ENCODE measurements at regions of chr4 and their contacts with region 1.

Region 1: DNA sequence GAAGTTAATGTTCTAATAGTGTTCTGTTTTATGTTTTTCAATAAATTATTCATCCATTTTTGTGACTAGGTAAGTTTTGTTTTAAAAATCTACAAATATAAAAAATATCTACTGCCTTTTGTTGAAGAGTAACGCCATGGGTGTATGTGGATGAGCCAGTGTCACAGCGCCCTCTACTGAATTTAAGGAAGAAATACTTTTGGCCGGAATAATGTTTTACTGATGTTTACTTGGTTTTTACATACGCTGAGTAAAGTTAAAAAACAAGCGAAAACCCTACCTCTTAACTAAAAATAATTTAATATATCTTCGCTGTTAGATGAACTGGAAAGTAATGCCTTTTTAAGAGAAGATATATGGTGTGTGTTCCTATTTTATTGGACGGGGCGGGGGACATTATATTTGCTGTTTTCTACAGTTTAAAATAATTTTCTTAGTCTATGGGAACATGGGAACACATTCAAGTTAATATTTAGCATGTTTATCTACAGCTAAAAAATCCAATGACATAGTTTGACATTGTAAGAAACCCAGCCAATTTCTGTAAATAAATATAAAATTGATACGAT is 86.1 kb downstream of the CPE start:
- DNase-seq: no peak
- ATAC-seq: peak; percentile 45
- H3K4me3 Mint-ChIP-seq: no peak overlapping the region
- H3K27ac Mint-ChIP-seq: no peak overlapping the region
- H3K4me1 Mint-ChIP-seq: no peaks in the 10 kb centered on the region
- H3K27me3 Mint-ChIP-seq: peaks cover 4% of the 10 kb centered on the region
- CTCF ChIP-seq: peak; percentile 80

Region 2: DNA sequence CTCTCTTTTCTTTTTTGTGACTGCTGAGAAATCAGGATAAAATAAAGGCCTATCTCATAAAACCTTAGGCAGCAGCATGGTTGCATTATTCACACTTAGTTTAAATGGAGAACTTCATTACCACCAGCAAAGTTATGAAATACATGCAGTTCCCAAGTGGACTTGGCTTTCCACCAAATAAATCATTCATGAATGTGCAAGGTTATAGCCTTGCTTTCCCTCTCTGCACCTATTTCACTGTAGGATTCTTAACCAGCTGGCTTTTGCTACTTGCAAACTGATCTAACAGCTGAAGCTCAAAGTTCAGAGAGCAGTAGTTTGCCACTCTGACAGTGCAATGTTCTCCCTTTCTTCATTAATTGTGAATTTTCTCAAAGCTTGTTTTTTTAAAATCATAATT is 851.1 kb before region 1 on chr4:
- CTCF ChIA-PET with region 1: no interaction called
- POLR2A ChIA-PET with region 1: no interaction called
- intact Hi-C with region 1: no loop called
- DNase-seq: no peak
- ATAC-seq: no peak
- H3K4me3 Mint-ChIP-seq: no peak overlapping the region
- H3K27ac Mint-ChIP-seq: no peak overlapping the region
- H3K4me1 Mint-ChIP-seq: peaks cover 2% of the 10 kb centered on the region
- H3K27me3 Mint-ChIP-seq: no peaks in the 10 kb centered on the region
- CTCF ChIP-seq: no peak

Region 3: DNA sequence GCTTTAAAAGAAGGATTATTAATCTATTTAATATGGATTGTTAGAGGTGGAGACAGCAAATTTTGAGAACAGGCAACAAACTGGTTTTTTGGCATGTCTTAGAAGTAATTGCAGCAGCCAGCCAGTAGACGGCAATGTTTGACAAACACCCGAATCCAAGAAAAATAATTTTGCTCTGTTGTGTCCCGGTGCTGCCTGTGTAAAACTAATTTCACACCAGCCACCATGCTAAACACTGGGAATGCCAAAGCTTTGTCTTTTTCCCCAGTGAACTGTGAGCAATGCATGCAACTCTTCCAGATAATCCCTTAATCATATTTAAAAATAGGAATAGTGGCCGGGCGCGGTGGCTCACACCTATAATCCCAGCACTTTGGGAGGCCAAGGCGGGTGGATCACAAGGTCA is 685.1 kb before region 1 on chr4:
- CTCF ChIA-PET with region 1: no interaction called
- POLR2A ChIA-PET with region 1: no interaction called
- intact Hi-C with region 1: loop called (anchors 1 kb)
- DNase-seq: no peak
- ATAC-seq: no peak
- H3K4me3 Mint-ChIP-seq: no peak overlapping the region
- H3K27ac Mint-ChIP-seq: no peak overlapping the region
- H3K4me1 Mint-ChIP-seq: no peaks in the 10 kb centered on the region
- H3K27me3 Mint-ChIP-seq: no peaks in the 10 kb centered on the region
- CTCF ChIP-seq: no peak

Region 4: GRCh38 chr4:165343353-165344191 is 121.3 kb before region 1 on chr4:
- CTCF ChIA-PET with region 1: no interaction called
- POLR2A ChIA-PET with region 1: no interaction called
- intact Hi-C with region 1: loop called (anchors 5 kb)
- DNase-seq: no peak
- ATAC-seq: no peak
- H3K4me3 Mint-ChIP-seq: no peak overlapping the region
- H3K27ac Mint-ChIP-seq: no peak overlapping the region
- H3K4me1 Mint-ChIP-seq: no peaks in the 10 kb centered on the region
- H3K27me3 Mint-ChIP-seq: no peaks in the 10 kb centered on the region
- CTCF ChIP-seq: no peak

Region 5: DNA sequence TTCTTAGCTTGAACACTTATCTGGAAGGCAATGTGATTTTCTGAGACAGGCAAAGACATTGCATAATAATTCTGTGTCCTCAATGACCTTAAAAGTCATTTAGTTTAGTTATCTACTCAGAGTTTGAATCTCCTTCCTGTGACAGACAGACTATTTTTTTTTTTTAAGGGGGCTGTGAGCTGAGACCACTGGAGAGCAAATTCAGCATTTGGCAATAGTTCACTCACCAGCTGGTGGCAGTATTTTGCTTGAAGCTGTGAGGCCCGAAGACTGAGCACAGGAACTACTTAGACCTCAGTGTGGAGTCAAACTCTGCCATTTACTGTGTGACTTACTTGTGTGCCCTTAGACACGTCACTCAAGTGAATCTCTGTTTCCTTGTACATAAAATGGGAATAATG is 109.0 kb before region 1 on chr4:
- CTCF ChIA-PET with region 1: no interaction called
- POLR2A ChIA-PET with region 1: no interaction called
- intact Hi-C with region 1: loop called (anchors 5 kb)
- DNase-seq: no peak
- ATAC-seq: peak; percentile 40
- H3K4me3 Mint-ChIP-seq: no peak overlapping the region
- H3K27ac Mint-ChIP-seq: no peak overlapping the region
- H3K4me1 Mint-ChIP-seq: peaks cover 2% of the 10 kb centered on the region
- H3K27me3 Mint-ChIP-seq: peaks cover 29% of the 10 kb centered on the region
- CTCF ChIP-seq: no peak

Region 6: DNA sequence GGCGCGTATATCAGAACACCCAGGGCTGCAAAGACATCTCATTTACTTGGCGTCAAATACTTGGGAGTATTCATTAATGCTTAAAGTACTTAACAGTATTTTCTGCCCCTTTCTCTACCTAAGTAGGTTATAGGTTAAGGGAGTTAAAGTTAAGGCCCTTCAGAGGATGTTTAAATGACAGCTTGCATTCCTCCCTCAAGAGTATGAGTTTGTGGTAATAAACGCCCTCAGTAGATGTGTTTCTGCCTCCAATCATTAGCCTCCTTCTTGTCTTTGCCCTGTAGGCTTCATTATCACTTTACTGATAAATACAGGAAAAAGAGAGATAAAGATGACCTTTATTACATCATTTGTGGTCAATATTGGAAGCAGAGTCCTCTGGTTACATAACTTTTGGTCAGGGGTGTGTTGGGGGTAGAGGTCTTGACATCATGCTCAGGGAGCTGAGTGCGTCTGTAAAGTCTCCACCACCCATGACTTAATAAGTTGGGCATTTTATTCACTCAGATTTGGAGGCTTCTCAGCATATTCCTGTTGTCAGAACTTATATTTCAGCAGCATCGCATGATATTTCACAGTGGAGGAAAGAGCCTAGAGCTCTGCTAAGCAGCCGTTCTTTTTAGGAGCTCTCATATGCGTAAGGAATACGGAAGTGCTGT is 59.8 kb after region 1 on chr4:
- CTCF ChIA-PET with region 1: no interaction called
- POLR2A ChIA-PET with region 1: no interaction called
- intact Hi-C with region 1: no loop called
- DNase-seq: no peak
- ATAC-seq: no peak
- H3K4me3 Mint-ChIP-seq: no peak overlapping the region
- H3K27ac Mint-ChIP-seq: no peak overlapping the region
- H3K4me1 Mint-ChIP-seq: no peaks in the 10 kb centered on the region
- H3K27me3 Mint-ChIP-seq: no peaks in the 10 kb centered on the region
- CTCF ChIP-seq: no peak

Region 7: DNA sequence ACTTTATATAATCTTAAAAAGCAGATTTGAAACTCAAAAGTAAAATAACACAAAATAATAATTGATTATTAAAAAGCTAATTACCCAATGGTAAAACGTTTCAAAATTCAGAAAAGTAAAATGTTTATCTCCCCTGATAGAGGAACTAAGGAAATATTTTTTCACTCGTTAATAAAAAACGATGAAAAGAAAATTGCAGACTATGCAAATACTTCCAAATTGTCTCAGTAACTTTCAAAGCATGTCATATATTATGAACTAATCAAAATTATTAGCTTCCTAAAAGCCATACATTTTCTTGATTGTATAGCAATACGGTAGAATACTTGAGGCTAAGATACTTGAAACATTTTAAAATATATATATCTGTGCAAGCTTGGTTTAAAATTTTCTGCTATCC is 774.5 kb after region 1 on chr4:
- CTCF ChIA-PET with region 1: no interaction called
- POLR2A ChIA-PET with region 1: no interaction called
- intact Hi-C with region 1: no loop called
- DNase-seq: no peak
- ATAC-seq: no peak
- H3K4me3 Mint-ChIP-seq: no peak overlapping the region
- H3K27ac Mint-ChIP-seq: no peak overlapping the region
- H3K4me1 Mint-ChIP-seq: no peaks in the 10 kb centered on the region
- H3K27me3 Mint-ChIP-seq: no peaks in the 10 kb centered on the region
- CTCF ChIP-seq: no peak

Region 8: GRCh38 chr4:166282081-166282770 is 817.3 kb after region 1 on chr4:
- CTCF ChIA-PET with region 1: no interaction called
- POLR2A ChIA-PET with region 1: no interaction called
- intact Hi-C with region 1: no loop called
- DNase-seq: no peak
- ATAC-seq: no peak
- H3K4me3 Mint-ChIP-seq: no peak overlapping the region
- H3K27ac Mint-ChIP-seq: no peak overlapping the region
- H3K4me1 Mint-ChIP-seq: no peaks in the 10 kb centered on the region
- H3K27me3 Mint-ChIP-seq: no peaks in the 10 kb centered on the region
- CTCF ChIP-seq: no peak

Measured in activated B cell treated with CpG ODN at 0.5 μM for 24 hours (primary cell).